ENCODE measurements at regions of chr17 and their contacts with region 1.

Region 1: GRCh38 chr17:42527273-42527703 is 8.8 kb upstream of the NAGLU start:
- DNase-seq: peak; percentile 68 to 81
- ATAC-seq: peak; percentile 66

Region 2: DNA sequence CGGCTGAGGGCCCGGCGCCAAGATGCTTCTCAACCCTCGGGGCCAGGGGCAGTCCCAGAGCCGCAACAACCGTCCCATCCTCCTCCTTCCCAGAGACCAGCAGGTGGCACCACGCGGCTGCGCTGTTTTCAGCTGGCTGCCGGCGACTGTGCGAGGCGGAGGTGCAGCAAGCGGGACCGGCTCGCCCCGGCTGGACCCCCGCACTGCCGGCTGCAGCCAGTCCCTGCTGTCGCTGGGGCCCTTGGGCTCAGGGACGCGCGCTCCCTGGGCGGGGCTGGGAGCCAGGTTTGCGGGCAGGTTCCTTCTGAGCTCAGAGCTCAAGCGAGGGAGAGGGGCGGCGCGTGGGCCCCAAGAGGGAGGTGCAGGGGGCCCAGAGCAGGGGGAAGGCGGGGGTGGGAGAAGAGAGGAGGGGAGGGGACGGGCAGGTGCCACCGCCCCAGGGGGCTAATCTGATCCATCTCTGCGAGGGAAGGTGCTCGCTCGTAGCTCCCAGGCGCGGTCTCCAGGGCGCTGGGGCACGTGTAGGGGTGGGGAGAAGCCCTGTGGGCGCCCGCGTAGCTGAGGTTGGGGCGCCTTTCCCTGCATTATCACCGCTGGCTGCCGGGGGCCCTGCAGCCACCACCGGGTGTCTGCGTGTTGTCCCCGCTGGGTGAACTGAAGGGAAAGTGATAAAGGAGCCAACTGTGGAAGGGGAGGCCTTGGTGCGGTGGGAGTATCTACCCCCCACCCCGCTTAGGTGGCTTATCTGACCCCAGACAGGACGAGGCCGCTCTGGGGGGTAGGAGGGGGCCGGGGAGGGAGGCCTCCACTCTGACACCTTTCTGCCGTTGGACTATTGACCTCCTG is 214.8 kb before region 1 on chr17:
- intact Hi-C with region 1: loop called in 1 of 2 experiments (anchors 10 kb)
- DNase-seq: peak; percentile 81 to 85
- ATAC-seq: peak; percentile 73

Region 3: GRCh38 chr17:44108440-44109324 is 1581.4 kb after region 1 on chr17:
- intact Hi-C with region 1: no loop called
- DNase-seq: peak; percentile 55 to 85
- ATAC-seq: no peak

Measured in left colon (tissue), 2 donors.